Endothelial cell of umbilical vein (primary cell): ENCODE measurements at regions of chr22 and their contacts with region 1.

Region 1: DNA sequence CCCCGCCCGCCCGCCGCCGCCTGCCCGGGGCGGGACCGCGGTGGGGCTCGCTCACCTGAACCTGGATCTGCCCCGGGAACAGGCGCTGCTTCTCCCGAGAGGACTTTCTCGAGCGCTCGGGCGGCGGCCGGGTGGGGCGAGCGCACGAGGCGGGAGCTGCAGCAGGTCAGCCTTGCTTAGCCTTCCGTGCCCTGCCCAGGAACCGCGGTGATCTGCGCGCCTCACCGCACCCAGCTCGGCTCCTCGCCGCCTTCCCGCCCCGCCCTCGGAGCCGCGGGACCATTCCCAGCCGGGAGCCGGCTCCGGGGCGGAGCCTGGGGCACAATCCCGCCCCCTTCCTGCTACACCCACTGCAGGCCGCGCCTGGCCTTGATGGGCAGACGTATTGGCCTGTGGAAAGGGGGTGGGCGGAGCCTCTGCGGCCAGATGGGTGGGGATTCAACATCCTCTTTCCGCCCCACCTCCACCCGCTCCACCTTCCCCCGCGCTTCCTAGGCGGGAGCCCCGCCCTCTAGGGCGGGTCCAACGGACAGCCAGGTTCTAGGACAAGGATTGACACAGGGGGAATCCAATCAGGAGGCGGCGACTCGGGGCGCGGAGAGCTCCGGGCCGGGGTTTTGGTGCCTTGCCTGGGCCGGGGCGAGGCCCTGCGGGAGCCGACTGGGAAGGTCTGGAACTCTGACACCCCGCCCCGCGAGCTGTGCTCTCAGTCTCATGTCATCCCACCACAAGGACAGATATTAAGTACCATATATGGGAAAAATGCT is at the start of gene MYH9:
- DNase-seq: peak; percentile 100
- H3K4me3 ChIP-seq: peak within 1 kb of the TSS; percentile 95 to 99 (median 97)
- H3K27ac ChIP-seq: peak within 1 kb of the TSS; percentile 92
- H3K4me1 ChIP-seq: peaks cover 27% of the 10 kb centered on the region
- H3K27me3 ChIP-seq: no peaks in the 10 kb centered on the region
- CTCF ChIP-seq: no peak
- POLR2A ChIP-seq: peak; percentile 98
- total RNA-seq, gene MYH9: 1,331 and 1,413 TPM in 2 replicates

Region 2: GRCh38 chr22:36331306-36331911 is 56.5 kb before region 1 on chr22:
- CTCF ChIA-PET with region 1: interaction called, 6 read pairs
- POLR2A ChIA-PET with region 1: interaction called, 12 read pairs
- dilution Hi-C with region 1: no loop called
- intact Hi-C with region 1: loop called (anchors 1 kb)
- DNase-seq: peak; percentile 93
- H3K4me3 ChIP-seq: no peak overlapping the region
- H3K27ac ChIP-seq: peak overlapping the region; percentile 99
- H3K4me1 ChIP-seq: peaks cover 97% of the 10 kb centered on the region
- H3K27me3 ChIP-seq: no peaks in the 10 kb centered on the region
- CTCF ChIP-seq: peak in 1 of 2 donors; percentile 3
- POLR2A ChIP-seq: peak; percentile 67

Region 3: GRCh38 chr22:36365020-36365411 is 22.9 kb before region 1 on chr22:
- CTCF ChIA-PET with region 1: no interaction called
- POLR2A ChIA-PET with region 1: interaction called, 13 read pairs
- dilution Hi-C with region 1: no loop called
- intact Hi-C with region 1: loop called (anchors 1 kb)
- DNase-seq: peak; percentile 94
- H3K4me3 ChIP-seq: no peak overlapping the region
- H3K27ac ChIP-seq: peak overlapping the region; percentile 88
- H3K4me1 ChIP-seq: peaks cover 92% of the 10 kb centered on the region
- H3K27me3 ChIP-seq: no peaks in the 10 kb centered on the region
- CTCF ChIP-seq: no peak
- POLR2A ChIP-seq: peak; percentile 70

Region 4: DNA sequence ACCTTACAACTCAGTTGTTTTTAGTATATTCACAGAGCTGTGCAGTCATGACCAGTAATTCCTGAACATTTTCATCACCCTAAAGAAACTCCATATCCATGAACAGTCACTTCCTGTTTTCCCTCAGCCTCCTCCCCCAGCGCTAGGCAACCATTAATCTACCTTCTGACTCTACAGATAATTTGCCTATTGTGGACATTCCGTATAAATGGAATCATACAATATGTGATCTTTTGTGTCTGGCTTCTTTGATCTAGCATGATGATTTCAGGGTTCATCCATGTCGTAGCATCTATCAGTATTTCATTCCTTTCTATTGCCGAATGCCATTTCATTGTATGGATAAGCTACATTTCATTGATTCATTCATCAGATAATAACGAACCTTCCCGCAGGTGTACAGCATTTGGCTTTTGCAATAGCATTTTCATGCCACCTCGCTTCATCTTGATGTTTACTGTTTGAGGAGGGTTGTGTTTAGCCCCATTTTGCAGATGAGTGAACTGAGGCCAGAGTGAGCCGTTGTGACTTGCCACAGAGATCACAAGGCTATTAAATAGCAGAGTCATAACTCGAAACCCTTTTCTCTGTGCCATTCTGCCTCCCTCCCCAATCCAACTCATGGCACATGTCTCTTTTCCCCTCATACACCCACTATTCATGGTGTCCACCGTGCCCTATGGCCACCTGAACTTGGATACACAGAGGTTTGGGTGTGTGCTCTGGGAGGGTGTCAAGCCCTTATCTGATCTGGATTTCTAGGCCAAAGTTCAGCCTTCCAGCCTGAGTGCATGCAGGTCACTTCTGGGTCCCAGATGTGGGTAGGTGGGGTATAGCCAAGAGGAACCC is 10.9 kb after region 1 on chr22:
- CTCF ChIA-PET with region 1: interaction called, 8 read pairs
- POLR2A ChIA-PET with region 1: interaction called, 9 read pairs
- dilution Hi-C with region 1: no loop called
- intact Hi-C with region 1: loop called (anchors 1 kb)
- DNase-seq: peak; percentile 86
- H3K4me3 ChIP-seq: no peak overlapping the region
- H3K27ac ChIP-seq: peak overlapping the region; percentile 81
- H3K4me1 ChIP-seq: peaks cover 27% of the 10 kb centered on the region
- H3K27me3 ChIP-seq: no peaks in the 10 kb centered on the region
- CTCF ChIP-seq: no peak
- POLR2A ChIP-seq: no peak

Region 5: GRCh38 chr22:36461669-36462649 is 74.0 kb after region 1 on chr22:
- CTCF ChIA-PET with region 1: interaction called, 10 read pairs
- POLR2A ChIA-PET with region 1: interaction called, 11 read pairs
- dilution Hi-C with region 1: no loop called
- intact Hi-C with region 1: loop called (anchors 1 kb)
- DNase-seq: peak; percentile 67
- H3K4me3 ChIP-seq: no peak overlapping the region
- H3K27ac ChIP-seq: peak overlapping the region; percentile 59
- H3K4me1 ChIP-seq: peaks cover 49% of the 10 kb centered on the region
- H3K27me3 ChIP-seq: no peaks in the 10 kb centered on the region
- CTCF ChIP-seq: no peak
- POLR2A ChIP-seq: no peak

Region 6: GRCh38 chr22:36546092-36546804 is 158.3 kb after region 1 on chr22:
- CTCF ChIA-PET with region 1: no interaction called
- POLR2A ChIA-PET with region 1: no interaction called
- dilution Hi-C with region 1: no loop called
- intact Hi-C with region 1: no loop called
- DNase-seq: peak; percentile 54
- H3K4me3 ChIP-seq: no peak overlapping the region
- H3K27ac ChIP-seq: no peak overlapping the region
- H3K4me1 ChIP-seq: peaks cover 23% of the 10 kb centered on the region
- H3K27me3 ChIP-seq: peaks cover 2 to 4% of the 10 kb centered on the region in 2 experiments
- CTCF ChIP-seq: peak; percentile 45 to 68
- POLR2A ChIP-seq: no peak